Endothelial cell of umbilical vein (primary cell): ENCODE measurements at regions of chr2 and their contacts with region 1.

Region 1: GRCh38 chr2:84640411-84640810 is 124.1 kb downstream of the DNAH6 start:
- DNase-seq: no peak
- H3K4me3 ChIP-seq: no peak overlapping the region
- H3K27ac ChIP-seq: no peak overlapping the region
- H3K4me1 ChIP-seq: no peaks in the 10 kb centered on the region
- H3K27me3 ChIP-seq: peaks cover 0 to 2% of the 10 kb centered on the region in 2 experiments
- CTCF ChIP-seq: no peak
- POLR2A ChIP-seq: no peak

Region 2: GRCh38 chr2:84800194-84800805 is 159.9 kb after region 1 on chr2:
- CTCF ChIA-PET with region 1: no interaction called
- POLR2A ChIA-PET with region 1: no interaction called
- dilution Hi-C with region 1: no loop called
- intact Hi-C with region 1: no loop called
- DNase-seq: no peak
- H3K4me3 ChIP-seq: no peak overlapping the region
- H3K27ac ChIP-seq: no peak overlapping the region
- H3K4me1 ChIP-seq: no peaks in the 10 kb centered on the region
- H3K27me3 ChIP-seq: peaks cover 0 to 2% of the 10 kb centered on the region in 2 experiments
- CTCF ChIP-seq: no peak
- POLR2A ChIP-seq: no peak

Region 3: DNA sequence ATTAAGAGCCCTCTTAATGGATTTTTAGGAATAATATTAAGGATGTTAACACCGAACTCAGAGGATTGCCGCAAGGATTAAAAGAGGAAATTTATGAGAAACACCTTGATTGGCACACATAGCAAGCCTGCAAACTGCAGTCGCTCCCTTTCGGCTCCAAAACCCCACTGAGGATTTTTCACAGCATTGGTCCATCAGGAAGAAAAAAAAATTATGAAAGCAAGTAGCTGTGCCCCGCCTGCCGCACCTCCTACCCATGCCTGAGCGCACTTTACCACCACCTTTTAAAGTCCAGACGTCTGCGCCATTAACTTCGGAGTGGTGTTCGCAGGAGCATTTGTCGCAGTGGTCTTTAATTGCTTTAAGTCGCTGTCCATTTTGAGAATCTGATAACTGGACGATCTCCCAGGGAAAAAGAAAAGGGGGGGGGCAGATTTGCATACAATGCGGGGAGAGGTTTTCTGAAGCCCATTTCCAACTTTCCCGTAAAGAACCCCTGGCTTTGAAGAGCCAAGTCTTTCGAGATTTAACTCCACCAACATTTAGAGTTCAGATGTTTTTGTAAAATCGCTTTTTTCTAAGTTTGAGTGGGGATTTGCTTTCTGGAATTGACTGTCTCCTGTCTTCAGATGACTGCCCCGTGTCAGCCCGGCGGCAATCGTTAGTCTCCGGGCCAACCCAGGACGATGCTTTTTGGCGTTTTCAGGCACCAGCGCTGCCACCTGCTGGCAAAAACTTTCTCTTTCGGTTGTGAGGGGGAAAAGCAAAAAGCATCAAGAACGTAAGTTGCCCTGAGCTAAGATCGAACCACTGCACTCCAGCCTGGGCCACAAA is 241.4 kb after region 1 on chr2:
- CTCF ChIA-PET with region 1: no interaction called
- POLR2A ChIA-PET with region 1: no interaction called
- dilution Hi-C with region 1: no loop called
- intact Hi-C with region 1: loop called (anchors 5 kb)
- DNase-seq: peak; percentile 82
- H3K4me3 ChIP-seq: peak overlapping the region; percentile 3 to 69 (median 15)
- H3K27ac ChIP-seq: no peak overlapping the region
- H3K4me1 ChIP-seq: peaks cover 16% of the 10 kb centered on the region
- H3K27me3 ChIP-seq: peaks cover 41% of the 10 kb centered on the region in 2 experiments
- CTCF ChIP-seq: peak; percentile 72 to 76
- POLR2A ChIP-seq: no peak